ENCODE measurements at regions of chr5 and their contacts with region 1.

Region 1: GRCh38 chr5:32388432-32389129 is 56.0 kb downstream of the ZFR start:
- DNase-seq: no peak
- ATAC-seq: no peak

Region 2: DNA sequence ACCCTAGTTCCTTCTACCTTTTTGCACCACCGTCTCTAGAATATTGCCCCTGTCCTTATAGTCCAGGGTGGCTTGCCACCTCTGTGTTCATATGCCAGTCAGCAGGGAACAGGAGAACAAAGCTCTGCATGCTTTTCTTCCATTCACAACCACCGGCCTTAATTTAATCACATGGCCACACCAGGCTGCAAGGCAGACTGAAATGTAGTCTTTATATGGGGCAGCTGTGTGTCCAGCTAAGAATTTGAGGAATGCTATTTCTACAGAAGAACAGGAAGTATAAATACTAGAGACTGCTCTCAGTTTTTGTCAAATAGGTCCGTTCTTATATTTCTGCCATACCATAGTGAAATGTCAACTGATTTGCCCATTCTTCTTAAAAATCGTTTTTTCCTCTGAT is 850.7 kb before region 1 on chr5:
- intact Hi-C with region 1: loop called (anchors 10 kb)
- DNase-seq: no peak
- ATAC-seq: no peak

Region 3: DNA sequence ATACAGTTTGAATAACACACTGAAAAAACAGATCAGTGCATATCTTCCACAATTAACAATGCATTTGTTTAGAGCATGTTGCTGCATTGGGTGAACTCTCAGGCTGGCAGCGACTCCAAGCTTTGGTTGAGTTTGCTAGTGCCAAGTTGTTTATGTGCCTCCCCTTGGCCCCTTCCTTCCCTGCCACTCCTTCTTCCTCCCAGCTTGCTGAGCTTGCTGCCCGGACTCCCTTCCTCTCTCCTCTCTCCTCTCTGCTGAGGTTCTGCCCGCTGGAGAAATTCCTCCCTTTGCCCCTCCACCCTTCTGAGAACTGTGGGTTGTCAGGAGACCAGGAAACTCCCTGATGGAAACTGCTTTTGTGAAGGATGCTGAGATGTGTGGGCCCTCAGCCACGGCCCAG is 502.4 kb before region 1 on chr5:
- intact Hi-C with region 1: no loop called
- DNase-seq: no peak
- ATAC-seq: no peak

Measured in Right ventricle myocardium inferior (tissue), 1 donor.